HCT116 (cell line): ENCODE measurements at regions of chr17 and their contacts with region 1.

Region 1: DNA sequence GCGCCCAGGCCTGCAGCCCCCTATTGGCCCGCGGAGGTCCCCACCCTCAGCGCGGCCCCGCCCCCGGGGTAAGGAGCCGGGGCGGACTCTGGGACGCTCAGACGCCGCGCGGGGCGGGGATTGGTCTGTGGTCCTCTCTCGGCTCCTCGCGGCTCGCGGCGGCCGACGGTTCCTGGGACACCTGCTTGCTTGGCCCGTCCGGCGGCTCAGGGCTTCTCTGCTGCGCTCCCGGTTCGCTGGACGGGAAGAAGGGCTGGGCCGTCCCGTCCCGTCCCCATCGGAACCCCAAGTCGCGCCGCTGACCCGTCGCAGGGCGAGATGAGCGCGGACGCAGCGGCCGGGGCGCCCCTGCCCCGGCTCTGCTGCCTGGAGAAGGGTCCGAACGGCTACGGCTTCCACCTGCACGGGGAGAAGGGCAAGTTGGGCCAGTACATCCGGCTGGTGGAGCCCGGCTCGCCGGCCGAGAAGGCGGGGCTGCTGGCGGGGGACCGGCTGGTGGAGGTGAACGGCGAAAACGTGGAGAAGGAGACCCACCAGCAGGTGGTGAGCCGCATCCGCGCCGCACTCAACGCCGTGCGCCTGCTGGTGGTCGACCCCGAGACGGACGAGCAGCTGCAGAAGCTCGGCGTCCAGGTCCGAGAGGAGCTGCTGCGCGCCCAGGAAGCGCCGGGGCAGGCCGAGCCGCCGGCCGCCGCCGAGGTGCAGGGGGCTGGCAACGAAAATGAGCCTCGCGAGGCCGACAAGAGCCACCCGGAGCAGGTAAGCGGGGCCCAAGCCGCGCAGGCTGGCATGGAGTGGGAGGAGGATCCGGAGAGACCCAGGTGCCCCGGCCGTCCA is at the start of gene NHERF1:
- DNase-seq: peak; percentile 77
- ATAC-seq: peak; percentile 90
- H3K4me3 ChIP-seq: peak within 1 kb of the TSS; percentile 74 to 90
- H3K27ac ChIP-seq: peak within 1 kb of the TSS; percentile 81
- H3K4me1 ChIP-seq: peaks cover 35 to 61% of the 10 kb centered on the region in 2 experiments
- H3K27me3 ChIP-seq: no peaks in the 10 kb centered on the region
- CTCF ChIP-seq: peak in 2 of 3 experiments; percentile 17 to 19; a peak in 2 of 6 replicates
- POLR2A ChIP-seq: peak; percentile 97
- RAD21 ChIP-seq: no peak
- total RNA-seq, gene NHERF1: 129 TPM

Region 2: GRCh38 chr17:74736513-74737298 is 12.0 kb before region 1 on chr17 and contains the start of gene RAB37:
- CTCF ChIA-PET with region 1: interaction called, 42 read pairs
- POLR2A ChIA-PET with region 1: interaction called, 12 read pairs
- RAD21 ChIA-PET with region 1: no interaction called
- intact Hi-C with region 1: no loop called
- DNase-seq: peak; percentile 47
- ATAC-seq: peak; percentile 79
- H3K4me3 ChIP-seq: peak within 1 kb of the TSS; percentile 69 to 76
- H3K27ac ChIP-seq: peak within 1 kb of the TSS; percentile 68
- H3K4me1 ChIP-seq: peaks cover 20 to 27% of the 10 kb centered on the region in 2 experiments
- H3K27me3 ChIP-seq: no peaks in the 10 kb centered on the region
- CTCF ChIP-seq: peak; percentile 62 to 84 (median 72)
- POLR2A ChIP-seq: peak; percentile 25
- RAD21 ChIP-seq: peak; percentile 82
- total RNA-seq, gene RAB37: 8.2 TPM

Region 3: DNA sequence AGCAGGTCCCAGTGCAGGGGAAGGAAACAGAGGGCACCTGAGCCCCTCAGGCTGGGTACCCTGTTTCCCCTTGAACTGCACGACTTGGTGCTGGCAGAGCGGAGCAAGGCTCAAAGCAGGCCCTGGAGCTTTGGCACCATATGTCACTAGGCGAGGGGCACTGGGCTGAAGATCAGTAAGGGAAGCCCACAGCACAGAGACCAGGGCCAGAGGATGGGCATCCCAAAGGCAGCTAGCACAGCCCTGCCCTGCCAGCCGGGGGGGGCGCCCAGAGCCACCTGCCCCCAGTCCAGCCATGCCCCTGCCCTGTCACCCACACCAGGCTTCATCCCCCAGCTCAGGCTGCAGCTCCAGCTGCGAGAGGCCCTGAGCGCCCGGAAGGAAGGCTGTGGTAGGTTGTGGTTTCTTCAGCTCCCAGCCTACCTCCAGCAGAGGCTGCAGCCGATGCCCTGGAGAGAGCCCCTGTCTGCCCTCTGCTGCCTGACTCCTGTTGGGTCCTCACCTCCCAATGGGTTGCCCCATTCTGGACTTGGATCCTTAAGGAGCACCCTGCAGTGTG is 10.6 kb after region 1 on chr17:
- CTCF ChIA-PET with region 1: interaction called, 20 read pairs
- POLR2A ChIA-PET with region 1: interaction called, 18 read pairs
- RAD21 ChIA-PET with region 1: interaction called in 1 of 2 experiments, 4 read pairs
- intact Hi-C with region 1: no loop called
- DNase-seq: no peak
- ATAC-seq: peak; percentile 1; the same call in 1 of the 2 replicates
- H3K4me3 ChIP-seq: no peak overlapping the region
- H3K27ac ChIP-seq: peak overlapping the region; percentile 63; the same call in 1 of the 2 replicates
- H3K4me1 ChIP-seq: peaks cover 46 to 54% of the 10 kb centered on the region in 2 experiments
- H3K27me3 ChIP-seq: no peaks in the 10 kb centered on the region
- CTCF ChIP-seq: no peak
- POLR2A ChIP-seq: no peak
- RAD21 ChIP-seq: no peak

Region 4: DNA sequence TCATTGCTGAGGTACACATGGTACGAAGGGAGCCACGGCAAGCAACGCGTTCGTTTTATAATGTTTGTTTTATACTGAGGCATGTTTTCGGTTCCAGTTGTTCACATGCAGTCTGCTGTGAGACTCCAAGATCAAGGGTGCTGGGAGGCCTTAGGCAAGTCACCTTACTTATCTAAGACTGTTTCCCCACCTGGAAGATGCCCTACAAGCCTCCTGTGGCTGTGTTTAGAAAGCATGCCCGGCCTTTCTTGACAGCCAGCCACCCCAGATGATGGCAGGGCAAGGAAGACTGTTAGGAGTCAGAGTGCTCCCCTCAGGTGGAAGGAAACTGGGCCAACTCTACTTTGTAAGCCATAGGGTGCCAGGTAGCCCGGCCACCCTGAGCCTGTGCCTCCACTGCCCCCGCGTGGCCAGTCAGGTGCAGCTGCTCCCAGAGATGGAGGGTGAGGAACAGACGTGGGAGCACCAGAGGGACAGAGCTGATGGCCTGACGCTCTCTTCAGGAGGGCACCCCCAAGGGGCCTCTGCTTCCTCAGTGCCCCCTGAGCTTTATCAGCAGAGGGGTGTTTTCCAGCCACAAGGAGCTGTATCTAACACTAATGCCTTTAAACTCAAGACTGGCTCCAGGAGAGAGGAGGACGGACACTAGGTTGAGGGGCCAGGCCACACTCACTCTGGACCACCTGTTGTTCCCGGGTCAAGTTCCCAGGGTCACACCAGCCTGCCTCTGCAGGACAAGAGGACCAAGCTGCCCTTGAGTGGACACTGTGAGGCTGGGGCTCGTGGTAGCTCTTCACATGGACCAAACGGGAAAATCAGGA is 22.0 kb after region 1 on chr17:
- CTCF ChIA-PET with region 1: interaction called, 55 read pairs
- POLR2A ChIA-PET with region 1: interaction called, 5 read pairs
- RAD21 ChIA-PET with region 1: interaction called, 7 to 8 read pairs
- intact Hi-C with region 1: loop called (anchors 1 kb)
- DNase-seq: peak; percentile 41
- ATAC-seq: peak; percentile 85
- H3K4me3 ChIP-seq: no peak overlapping the region
- H3K27ac ChIP-seq: 0 out of 2 replicates have a peak overlapping the region, but pooled peaks have one; percentile 0
- H3K4me1 ChIP-seq: peaks cover 6 to 27% of the 10 kb centered on the region in 2 experiments; a peak in 3 of 4 replicates
- H3K27me3 ChIP-seq: no peaks in the 10 kb centered on the region
- CTCF ChIP-seq: peak; percentile 94 to 98 (median 95)
- POLR2A ChIP-seq: no peak
- RAD21 ChIP-seq: peak; percentile 95

Region 5: GRCh38 chr17:74776044-74776977 is 27.6 kb after region 1 on chr17 and contains the start of gene NAT9:
- CTCF ChIA-PET with region 1: interaction called, 55 read pairs
- POLR2A ChIA-PET with region 1: interaction called, 5 read pairs
- RAD21 ChIA-PET with region 1: interaction called, 7 to 8 read pairs
- intact Hi-C with region 1: loop called (anchors 1 kb)
- DNase-seq: peak; percentile 92
- ATAC-seq: peak; percentile 85
- H3K4me3 ChIP-seq: peak within 1 kb of the TSS; percentile 75 to 79
- H3K27ac ChIP-seq: peak within 1 kb of the TSS; percentile 60
- H3K4me1 ChIP-seq: peaks cover 9 to 16% of the 10 kb centered on the region in 2 experiments
- H3K27me3 ChIP-seq: no peaks in the 10 kb centered on the region
- CTCF ChIP-seq: no peak
- POLR2A ChIP-seq: peak; percentile 82
- RAD21 ChIP-seq: no peak
- total RNA-seq, gene NAT9: 88.7 TPM

Region 6: DNA sequence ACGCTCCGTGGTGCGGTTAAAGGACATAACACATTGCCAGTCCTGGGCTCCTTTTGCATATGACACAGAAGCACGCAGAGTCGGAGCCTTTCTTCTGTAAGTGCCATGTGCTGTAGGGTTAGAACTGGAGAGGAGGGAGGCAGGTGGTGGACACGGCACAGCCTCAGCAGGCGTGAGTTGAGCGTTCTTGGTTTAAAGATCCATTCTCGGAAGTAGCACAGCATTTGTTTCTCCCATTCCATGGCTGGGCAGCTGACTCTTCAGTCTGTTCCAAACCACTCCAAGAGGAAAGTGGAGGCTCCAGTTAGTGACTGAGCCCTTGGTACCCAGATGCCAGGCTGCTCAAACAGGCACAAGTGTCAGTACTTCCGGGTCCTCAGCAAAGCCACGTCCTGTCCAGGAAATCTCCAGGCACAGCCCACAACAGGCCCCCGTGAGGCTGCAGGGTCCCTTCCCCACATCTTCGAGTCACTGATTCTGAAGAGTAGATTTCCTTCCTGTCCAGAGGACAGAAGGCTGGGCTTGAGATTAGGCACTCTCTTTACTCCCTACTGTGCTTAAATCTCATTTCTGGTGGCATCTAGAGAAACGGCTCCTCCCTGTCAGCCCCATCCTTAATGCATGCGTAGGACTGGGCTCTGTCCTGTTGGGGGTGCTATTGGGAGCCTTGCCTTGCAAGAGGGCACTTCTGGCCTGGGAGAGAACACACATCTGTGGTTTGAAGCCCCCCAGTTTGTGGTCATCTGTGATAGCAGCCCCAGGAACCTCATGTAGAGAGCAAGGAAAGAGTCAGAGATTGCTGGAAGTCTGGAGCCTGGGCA is 67.0 kb after region 1 on chr17:
- CTCF ChIA-PET with region 1: no interaction called
- POLR2A ChIA-PET with region 1: no interaction called
- RAD21 ChIA-PET with region 1: no interaction called
- intact Hi-C with region 1: no loop called
- DNase-seq: no peak
- ATAC-seq: peak; percentile 80
- H3K4me3 ChIP-seq: no peak overlapping the region
- H3K27ac ChIP-seq: no peak overlapping the region
- H3K4me1 ChIP-seq: no peaks in the 10 kb centered on the region
- H3K27me3 ChIP-seq: no peaks in the 10 kb centered on the region
- CTCF ChIP-seq: peak; percentile 17 to 61 (median 61); a peak in 5 of 6 replicates
- POLR2A ChIP-seq: no peak
- RAD21 ChIP-seq: no peak

Region 7: DNA sequence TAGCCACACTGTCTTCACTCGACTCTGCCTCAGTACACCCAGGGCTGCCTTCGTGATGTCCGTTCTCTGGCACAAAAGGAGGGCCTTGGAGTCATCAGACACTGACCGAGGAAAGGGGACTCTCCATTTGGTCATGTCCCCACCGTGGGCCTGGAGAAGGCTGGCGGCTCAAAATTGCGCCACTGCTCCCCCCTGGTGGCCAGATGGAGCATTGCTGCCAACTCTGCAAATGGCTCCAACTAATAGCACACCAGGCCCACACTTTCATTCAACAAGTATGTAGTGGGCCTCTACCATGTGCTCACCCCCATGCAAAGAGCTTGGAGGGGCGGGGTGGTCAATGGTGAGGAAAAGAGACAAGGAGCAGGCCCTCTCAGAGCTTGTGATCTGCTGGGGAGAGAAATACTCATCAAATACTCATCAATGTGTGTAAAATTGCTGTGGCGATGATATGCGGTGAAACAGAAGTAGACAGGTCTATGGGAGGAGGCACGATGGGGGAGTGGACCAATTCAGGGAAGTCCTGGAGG is 116.2 kb after region 1 on chr17:
- CTCF ChIA-PET with region 1: interaction called, 22 read pairs
- POLR2A ChIA-PET with region 1: interaction called, 3 read pairs
- RAD21 ChIA-PET with region 1: no interaction called
- intact Hi-C with region 1: loop called (anchors 2 kb)
- DNase-seq: peak; percentile 44
- ATAC-seq: peak; percentile 80
- H3K4me3 ChIP-seq: no peak overlapping the region
- H3K27ac ChIP-seq: peak overlapping the region; percentile 7
- H3K4me1 ChIP-seq: peaks cover 0 to 17% of the 10 kb centered on the region in 2 experiments; a peak in 1 of 4 replicates
- H3K27me3 ChIP-seq: no peaks in the 10 kb centered on the region
- CTCF ChIP-seq: peak; percentile 89 to 100 (median 100)
- POLR2A ChIP-seq: no peak
- RAD21 ChIP-seq: no peak; the same call in 1 of the 2 replicates